ENCODE measurements at regions of chr12 and their contacts with region 1.

Region 1: DNA sequence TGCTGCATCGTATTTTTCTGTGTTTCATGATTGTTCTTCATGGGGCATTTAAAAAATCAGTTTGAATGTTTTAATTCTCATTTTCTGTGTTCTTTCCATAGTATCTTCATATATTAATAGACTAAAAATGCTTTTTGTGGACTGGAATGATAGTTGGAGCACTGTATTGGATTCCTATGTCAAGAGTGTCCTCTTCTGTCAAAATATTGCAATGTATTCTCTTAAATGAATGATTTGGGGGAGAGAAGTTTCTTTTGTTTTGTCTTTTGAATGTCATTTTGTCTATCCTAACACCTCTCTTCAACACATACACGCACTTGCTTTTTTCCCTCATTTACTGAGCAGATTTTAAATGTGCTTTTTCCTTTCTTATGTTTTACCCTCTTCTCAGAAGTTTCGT is 4.7 kb upstream of the EIF2S3B start:
- DNase-seq: no peak
- H3K4me3 ChIP-seq: no peak overlapping the region
- H3K27ac ChIP-seq: peak overlapping the region in 6 of 59 donors; percentile 0 to 8 (median 4)
- H3K27me3 ChIP-seq: no peaks in the 10 kb centered on the region
- CTCF ChIP-seq: peak in 46 of 56 donors; percentile 12 to 74 (median 46)

Region 2: GRCh38 chr12:10331642-10332239 is 169.3 kb before region 1 on chr12:
- intact Hi-C with region 1: loop called in 1 of 2 experiments (anchors 2 kb)
- DNase-seq: no peak
- H3K4me3 ChIP-seq: no peak overlapping the region
- H3K27ac ChIP-seq: no peak overlapping the region
- H3K27me3 ChIP-seq: no peaks in the 10 kb centered on the region
- CTCF ChIP-seq: peak in 55 of 56 donors; percentile 24 to 93 (median 78)

Region 3: GRCh38 chr12:10364815-10365622 is 136.0 kb before region 1 on chr12:
- intact Hi-C with region 1: loop called in 1 of 2 experiments (anchors 5 kb)
- DNase-seq: peak in 7 of 10 donors; percentile 44 to 65 (median 54)
- H3K4me3 ChIP-seq: peak overlapping the region; percentile 55 to 89 (median 75)
- H3K27ac ChIP-seq: peak overlapping the region; percentile 86 to 100 (median 99)
- H3K27me3 ChIP-seq: no peaks in the 10 kb centered on the region
- CTCF ChIP-seq: peak in 1 of 56 donors; percentile 11

Region 4: GRCh38 chr12:10406725-10407124 is 94.3 kb before region 1 on chr12:
- intact Hi-C with region 1: no loop called
- DNase-seq: no peak
- H3K4me3 ChIP-seq: no peak overlapping the region
- H3K27ac ChIP-seq: no peak overlapping the region
- H3K27me3 ChIP-seq: no peaks in the 10 kb centered on the region
- CTCF ChIP-seq: no peak

Region 5: GRCh38 chr12:10562306-10562933 is 61.4 kb after region 1 on chr12:
- intact Hi-C with region 1: loop called in 1 of 2 experiments (anchors 10 kb)
- DNase-seq: no peak
- H3K4me3 ChIP-seq: no peak overlapping the region
- H3K27ac ChIP-seq: no peak overlapping the region
- H3K27me3 ChIP-seq: peaks cover 0 to 3% (median 0%) of the 10 kb centered on the region in 45 donors
- CTCF ChIP-seq: peak; percentile 69 to 98 (median 87)

Region 6: GRCh38 chr12:10705655-10706054 is 204.6 kb after region 1 on chr12:
- intact Hi-C with region 1: no loop called
- DNase-seq: no peak
- H3K4me3 ChIP-seq: no peak overlapping the region
- H3K27ac ChIP-seq: no peak overlapping the region
- H3K27me3 ChIP-seq: no peaks in the 10 kb centered on the region
- CTCF ChIP-seq: no peak

Measured in dorsolateral prefrontal cortex (tissue), 120 donors.